MCF 10A (cell line): ENCODE measurements at regions of chr2 and their contacts with region 1.

Region 1: DNA sequence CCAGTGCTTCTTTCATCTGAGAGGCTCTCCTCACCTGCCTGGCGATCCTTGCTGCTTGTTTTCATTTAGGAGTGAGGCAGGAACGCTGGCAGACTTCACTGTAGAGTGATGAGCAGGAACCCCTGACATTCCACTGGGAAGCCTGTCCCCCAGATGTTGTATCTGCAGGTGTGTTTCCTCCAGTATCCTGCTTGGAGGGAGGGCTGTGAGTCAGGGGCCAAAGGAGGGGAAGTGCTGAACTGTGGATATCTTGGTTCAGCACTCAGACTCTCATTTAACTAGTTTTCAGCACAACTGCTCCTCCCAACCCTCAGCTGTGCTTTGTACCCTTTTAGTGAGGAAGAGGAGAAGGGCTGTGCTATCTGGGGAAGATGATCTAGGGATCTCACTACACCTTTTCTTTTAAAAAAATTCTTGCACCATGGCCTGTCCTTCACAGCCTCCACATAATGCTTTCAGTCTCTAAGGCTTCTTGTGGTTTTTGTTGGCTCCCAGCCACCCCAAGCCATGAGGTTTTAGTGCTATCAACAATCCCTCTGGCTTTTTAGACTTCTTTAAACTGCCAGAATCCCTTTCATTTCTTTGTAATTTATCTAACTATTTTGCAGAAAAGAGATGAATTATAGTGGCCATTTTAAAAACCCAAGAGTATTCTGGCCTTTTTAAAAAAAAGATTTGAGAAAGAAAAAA is 11.2 kb downstream of the ANKAR start:
- DNase-seq: peak; percentile 68
- H3K4me3 Mint-ChIP-seq: no peak overlapping the region
- H3K27ac Mint-ChIP-seq: peak overlapping the region; percentile 65
- H3K4me1 Mint-ChIP-seq: peaks cover 11% of the 10 kb centered on the region
- H3K27me3 Mint-ChIP-seq: no peaks in the 10 kb centered on the region
- CTCF ChIP-seq: no peak

Region 2: DNA sequence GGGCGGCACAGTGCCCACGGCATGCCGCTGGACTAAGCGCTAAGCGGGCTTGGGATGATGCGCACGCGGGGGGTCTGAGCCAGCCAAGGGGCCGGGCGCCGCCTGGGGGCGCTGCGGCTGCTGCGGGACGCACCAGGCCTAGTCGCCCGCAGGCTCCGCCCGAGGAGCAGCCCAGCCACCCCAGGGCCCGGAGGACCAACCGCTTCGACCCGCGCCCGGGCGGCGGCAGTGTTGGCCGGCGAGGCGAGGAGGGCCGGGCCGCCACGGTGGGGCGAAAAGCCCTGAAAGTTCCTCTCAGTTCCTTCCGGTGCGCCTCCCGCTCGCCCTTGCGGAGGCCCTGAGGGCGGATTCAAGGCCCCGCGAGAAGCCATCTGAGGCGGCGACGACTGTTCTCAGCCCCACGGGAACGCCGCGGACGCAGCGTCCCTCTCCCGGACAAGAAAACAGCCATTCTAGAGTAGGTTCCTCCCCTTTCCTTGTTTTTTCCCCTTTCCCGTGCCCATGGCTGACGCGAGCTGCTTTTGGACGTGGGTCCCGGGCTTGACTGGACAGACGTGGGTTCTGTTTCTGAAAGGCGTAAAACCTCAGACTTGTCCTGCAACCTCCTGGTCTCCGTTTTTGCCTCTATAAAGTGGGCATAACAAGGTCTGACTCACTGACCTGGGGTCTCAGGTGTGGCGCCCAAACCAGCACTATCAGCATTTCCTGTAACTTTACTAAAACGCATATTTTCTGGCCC is 11.1 kb before region 1 on chr2 and contains the start of gene ANKAR:
- CTCF ChIA-PET with region 1: interaction called, 23 read pairs
- POLR2A ChIA-PET with region 1: interaction called, 4 read pairs
- intact Hi-C with region 1: no loop called
- DNase-seq: peak; percentile 62
- H3K4me3 Mint-ChIP-seq: peak within 1 kb of the TSS; percentile 86
- H3K27ac Mint-ChIP-seq: peak within 1 kb of the TSS; percentile 95
- H3K4me1 Mint-ChIP-seq: peaks cover 5% of the 10 kb centered on the region
- H3K27me3 Mint-ChIP-seq: no peaks in the 10 kb centered on the region
- CTCF ChIP-seq: peak; percentile 75
- total RNA-seq, gene ANKAR: 4.6 and 5.1 TPM in 2 replicates

Region 3: DNA sequence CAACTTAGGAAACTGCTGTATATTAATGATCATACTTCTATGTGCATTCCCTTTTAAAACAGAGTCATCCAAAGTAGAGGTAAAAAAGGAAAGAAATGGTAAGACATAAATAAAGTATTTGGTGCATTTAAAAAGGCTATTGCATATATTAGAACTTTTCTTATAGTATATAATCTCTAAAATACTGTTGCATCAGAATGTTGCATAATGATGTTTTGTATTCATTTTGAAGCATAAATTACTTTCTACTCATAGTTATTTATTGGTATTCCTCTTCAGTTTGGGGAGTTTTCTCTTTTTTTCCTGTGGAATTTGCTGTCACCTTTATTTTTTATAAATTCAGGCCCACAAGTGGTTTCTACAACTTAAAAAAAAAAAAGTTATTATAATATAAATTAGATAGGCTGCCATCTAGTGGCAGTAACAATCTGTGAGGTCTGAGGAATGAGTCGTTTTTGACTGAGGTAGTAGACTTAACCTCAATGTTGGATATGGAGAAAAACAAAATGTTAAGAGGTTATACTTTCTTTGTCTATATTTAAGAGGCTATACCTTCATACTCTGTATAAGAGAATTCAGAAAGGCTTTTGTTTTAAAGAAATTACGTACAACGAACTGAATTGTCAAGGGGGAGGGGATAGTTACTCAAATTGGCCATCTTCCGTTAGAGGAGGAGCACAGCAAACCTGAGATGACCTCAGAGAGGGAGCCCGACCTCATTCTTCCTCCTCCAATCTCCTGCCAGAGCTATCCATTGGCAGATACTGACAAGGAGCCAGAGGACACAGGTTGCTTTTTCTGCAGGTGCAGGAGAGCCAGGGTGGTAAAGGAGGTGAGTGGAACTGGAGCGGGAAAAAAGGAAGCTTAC is 12.6 kb after region 1 on chr2:
- CTCF ChIA-PET with region 1: interaction called, 31 read pairs
- POLR2A ChIA-PET with region 1: interaction called, 5 read pairs
- intact Hi-C with region 1: no loop called
- DNase-seq: peak; percentile 54
- H3K4me3 Mint-ChIP-seq: no peak overlapping the region
- H3K27ac Mint-ChIP-seq: no peak overlapping the region
- H3K4me1 Mint-ChIP-seq: no peaks in the 10 kb centered on the region
- H3K27me3 Mint-ChIP-seq: no peaks in the 10 kb centered on the region
- CTCF ChIP-seq: peak; percentile 45

Region 4: GRCh38 chr2:189709501-189710221 is 24.0 kb after region 1 on chr2:
- CTCF ChIA-PET with region 1: no interaction called
- POLR2A ChIA-PET with region 1: no interaction called
- intact Hi-C with region 1: no loop called
- DNase-seq: no peak
- H3K4me3 Mint-ChIP-seq: no peak overlapping the region
- H3K27ac Mint-ChIP-seq: no peak overlapping the region
- H3K4me1 Mint-ChIP-seq: no peaks in the 10 kb centered on the region
- H3K27me3 Mint-ChIP-seq: no peaks in the 10 kb centered on the region
- CTCF ChIP-seq: no peak